ENCODE measurements at regions of chr2 and their contacts with region 1.

Region 1: GRCh38 chr2:29130295-29130694 is 15.1 kb downstream of the CLIP4 start:
- DNase-seq: peak; percentile 41 to 96
- ATAC-seq: peak; percentile 90 to 95
- H3K4me3 ChIP-seq: peak overlapping the region; percentile 42
- H3K27ac ChIP-seq: peak overlapping the region; percentile 89 to 96
- H3K4me1 ChIP-seq: peaks cover 79% of the 10 kb centered on the region
- CTCF ChIP-seq: no peak
- EP300 ChIP-seq: peak in 1 of 2 experiments; percentile 57; a peak in 2 of 5 replicates
- POLR2A ChIP-seq: no peak
- RAD21 ChIP-seq: 0 out of 5 replicates have a peak, but pooled peaks of 1 of the 2 experiments have one; percentile 15

Region 2: GRCh38 chr2:28991021-28991420 is 139.3 kb before region 1 on chr2:
- CTCF ChIA-PET with region 1: no interaction called
- POLR2A ChIA-PET with region 1: no interaction called
- DNase-seq: no peak
- ATAC-seq: no peak
- H3K4me3 ChIP-seq: no peak overlapping the region
- H3K27ac ChIP-seq: no peak overlapping the region
- H3K4me1 ChIP-seq: peaks cover 7% of the 10 kb centered on the region; the same call in 2 of the 3 replicates
- CTCF ChIP-seq: no peak
- EP300 ChIP-seq: no peak
- POLR2A ChIP-seq: no peak
- RAD21 ChIP-seq: no peak

Region 3: DNA sequence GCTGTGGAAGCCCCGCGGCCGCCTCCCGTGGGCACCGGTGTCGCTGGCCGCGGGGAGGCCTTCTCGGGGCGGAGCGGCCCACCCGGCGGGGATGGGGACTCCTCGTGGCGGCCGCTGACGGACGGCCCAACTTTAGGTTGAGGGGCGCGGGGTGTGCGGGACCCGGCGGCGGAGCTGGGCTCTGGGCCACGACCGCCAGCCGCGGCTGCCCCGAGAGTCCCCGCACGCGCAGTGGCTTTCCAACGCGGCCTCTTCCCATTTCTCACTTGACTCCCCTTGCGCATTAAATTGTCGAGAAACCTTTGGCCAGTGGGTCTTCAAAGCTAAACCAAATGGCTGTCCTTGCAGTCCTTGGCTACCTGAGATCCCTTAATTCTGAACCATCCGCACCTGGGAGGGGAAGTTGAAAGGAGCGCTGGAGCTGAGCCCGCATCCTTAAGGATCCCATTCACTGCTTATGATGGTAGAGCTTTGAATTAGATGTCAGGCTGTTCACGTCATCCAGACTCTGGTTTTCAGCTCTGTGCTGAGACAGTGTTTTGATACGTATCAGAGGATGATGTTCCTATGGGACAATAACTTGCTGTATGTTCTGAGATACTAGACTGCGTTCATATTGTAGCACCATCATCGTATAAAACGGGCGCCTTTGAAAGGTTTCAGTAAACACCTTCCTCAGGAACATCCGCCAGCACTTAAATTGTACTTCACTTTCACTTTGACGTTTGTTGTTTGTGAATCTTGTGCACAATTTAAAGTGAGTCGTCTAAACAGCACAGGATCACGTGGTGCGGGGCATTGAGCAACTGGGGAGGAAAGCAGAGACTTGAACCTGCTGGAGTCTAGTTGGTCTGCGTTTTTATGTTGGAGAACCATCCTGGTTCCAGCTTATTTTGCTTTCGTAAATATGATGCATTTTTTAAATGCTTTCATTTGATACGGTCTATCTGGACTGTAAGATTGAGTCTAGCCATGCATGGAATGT is 14.2 kb before region 1 on chr2:
- CTCF ChIA-PET with region 1: interaction called, 12 read pairs
- POLR2A ChIA-PET with region 1: interaction called, 122 read pairs
- DNase-seq: peak; percentile 60 to 82
- ATAC-seq: peak; percentile 57 to 65
- H3K4me3 ChIP-seq: peak overlapping the region; percentile 79
- H3K27ac ChIP-seq: peak overlapping the region; percentile 98 to 99
- H3K4me1 ChIP-seq: peaks cover 74% of the 10 kb centered on the region
- CTCF ChIP-seq: no peak
- EP300 ChIP-seq: no peak
- POLR2A ChIP-seq: peak; percentile 38
- RAD21 ChIP-seq: no peak; a peak in 1 of 5 replicates

Region 4: DNA sequence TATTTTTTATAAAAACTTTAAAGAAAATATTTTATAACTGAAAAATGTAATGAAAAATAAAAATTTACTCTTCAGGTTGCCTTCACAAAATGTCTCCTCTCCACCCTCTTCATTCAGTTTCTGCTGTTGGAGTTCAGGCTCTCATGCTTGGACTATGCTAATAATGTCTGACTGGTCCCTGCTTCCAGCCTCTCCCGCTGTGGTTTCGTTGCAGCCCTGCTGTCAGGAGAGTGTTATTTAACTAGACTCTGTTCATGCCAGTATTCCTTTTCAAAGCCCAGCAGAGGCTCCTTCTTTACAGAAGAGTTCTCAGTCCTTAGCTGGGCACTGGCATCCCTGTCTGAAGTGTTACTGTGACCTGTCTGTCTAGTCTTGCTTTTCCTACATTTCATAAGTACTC is 25.3 kb after region 1 on chr2:
- CTCF ChIA-PET with region 1: no interaction called
- POLR2A ChIA-PET with region 1: no interaction called
- DNase-seq: no peak
- ATAC-seq: peak in 1 of 2 experiments; percentile 26; a peak in 1 of 6 replicates
- H3K4me3 ChIP-seq: no peak overlapping the region
- H3K27ac ChIP-seq: no peak overlapping the region
- H3K4me1 ChIP-seq: no peaks in the 10 kb centered on the region
- CTCF ChIP-seq: no peak
- EP300 ChIP-seq: no peak
- POLR2A ChIP-seq: no peak
- RAD21 ChIP-seq: no peak